ENCODE measurements at regions of chr11 and their contacts with region 1.

Region 1: GRCh38 chr11:129391821-129392220 is 16.2 kb downstream of the BARX2 start:
- DNase-seq: no peak
- H3K4me3 ChIP-seq: no peak overlapping the region
- H3K27ac ChIP-seq: no peak overlapping the region
- H3K4me1 ChIP-seq: no peaks in the 10 kb centered on the region
- H3K27me3 ChIP-seq: no peaks in the 10 kb centered on the region
- CTCF ChIP-seq: no peak
- POLR2A ChIP-seq: no peak

Region 2: GRCh38 chr11:129418039-129418438 is 26.2 kb after region 1 on chr11:
- intact Hi-C with region 1: no loop called
- DNase-seq: no peak
- H3K4me3 ChIP-seq: no peak overlapping the region
- H3K27ac ChIP-seq: peak overlapping the region; percentile 26 to 57
- H3K4me1 ChIP-seq: no peaks in the 10 kb centered on the region
- H3K27me3 ChIP-seq: no peaks in the 10 kb centered on the region
- CTCF ChIP-seq: no peak
- POLR2A ChIP-seq: no peak

Region 3: GRCh38 chr11:129440028-129440713 is 48.4 kb after region 1 on chr11:
- intact Hi-C with region 1: loop called (anchors 2 kb)
- DNase-seq: peak in 1 of 2 donors; percentile 42
- H3K4me3 ChIP-seq: no peak overlapping the region
- H3K27ac ChIP-seq: peak overlapping the region in 1 of 2 donors; percentile 30
- H3K4me1 ChIP-seq: peaks cover 0 to 3% of the 10 kb centered on the region in 2 donors
- H3K27me3 ChIP-seq: no peaks in the 10 kb centered on the region
- CTCF ChIP-seq: no peak
- POLR2A ChIP-seq: no peak

Measured in breast epithelium (tissue), 4 donors.